Common myeloid progenitor, CD34-positive (primary cell): ENCODE measurements at regions of chr14 and their contacts with region 1.

Region 1: DNA sequence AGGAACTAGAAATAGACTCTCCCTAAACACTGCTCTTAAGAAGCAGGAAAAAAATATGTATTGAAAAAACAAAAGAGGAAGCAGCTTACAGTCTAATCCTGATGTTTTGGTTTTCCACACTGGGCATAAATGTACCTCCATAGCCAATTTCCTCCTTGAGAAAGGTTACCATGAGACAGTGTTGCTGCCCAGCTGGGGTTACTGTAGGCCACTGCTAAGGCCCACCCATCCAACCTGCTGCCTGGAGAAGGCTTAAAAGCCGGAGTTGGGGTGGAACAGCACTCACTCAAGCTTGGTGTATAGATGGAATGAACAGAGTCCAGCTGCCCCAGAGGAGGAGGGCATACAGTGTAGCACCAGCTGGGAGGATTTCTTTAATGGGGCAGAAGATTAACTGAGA is 41.1 kb downstream of the ERG28 start:
- DNase-seq: no peak
- H3K4me3 ChIP-seq: no peak overlapping the region
- H3K27ac ChIP-seq: no peak overlapping the region
- H3K4me1 ChIP-seq: peaks cover 0 to 9% (median 2%) of the 10 kb centered on the region in 4 experiments
- H3K27me3 ChIP-seq: no peaks in the 10 kb centered on the region

Region 2: GRCh38 chr14:75570797-75571196 is 48.8 kb before region 1 on chr14:
- CTCF ChIA-PET with region 1: no interaction called
- POLR2A ChIA-PET with region 1: no interaction called
- DNase-seq: peak in 2 of 3 donors; percentile 66 to 74
- H3K4me3 ChIP-seq: no peak overlapping the region
- H3K27ac ChIP-seq: no peak overlapping the region
- H3K4me1 ChIP-seq: peaks cover 0 to 8% (median 3%) of the 10 kb centered on the region in 4 experiments
- H3K27me3 ChIP-seq: no peaks in the 10 kb centered on the region

Region 3: GRCh38 chr14:75604856-75605851 is 14.4 kb before region 1 on chr14:
- CTCF ChIA-PET with region 1: interaction called, 16 read pairs
- POLR2A ChIA-PET with region 1: interaction called, 3 read pairs
- DNase-seq: peak; percentile 10 to 76 (median 63)
- H3K4me3 ChIP-seq: no peak overlapping the region
- H3K27ac ChIP-seq: no peak overlapping the region
- H3K4me1 ChIP-seq: peaks cover 0 to 15% (median 0%) of the 10 kb centered on the region in 4 experiments
- H3K27me3 ChIP-seq: no peaks in the 10 kb centered on the region